Right ventricle myocardium inferior (tissue), 1 donor: ENCODE measurements at regions of chr5 and their contacts with region 1.

Region 1: GRCh38 chr5:89457411-89458331 is 574.7 kb upstream of the MEF2C start:
- DNase-seq: no peak
- ATAC-seq: peak; percentile 97

Region 2: DNA sequence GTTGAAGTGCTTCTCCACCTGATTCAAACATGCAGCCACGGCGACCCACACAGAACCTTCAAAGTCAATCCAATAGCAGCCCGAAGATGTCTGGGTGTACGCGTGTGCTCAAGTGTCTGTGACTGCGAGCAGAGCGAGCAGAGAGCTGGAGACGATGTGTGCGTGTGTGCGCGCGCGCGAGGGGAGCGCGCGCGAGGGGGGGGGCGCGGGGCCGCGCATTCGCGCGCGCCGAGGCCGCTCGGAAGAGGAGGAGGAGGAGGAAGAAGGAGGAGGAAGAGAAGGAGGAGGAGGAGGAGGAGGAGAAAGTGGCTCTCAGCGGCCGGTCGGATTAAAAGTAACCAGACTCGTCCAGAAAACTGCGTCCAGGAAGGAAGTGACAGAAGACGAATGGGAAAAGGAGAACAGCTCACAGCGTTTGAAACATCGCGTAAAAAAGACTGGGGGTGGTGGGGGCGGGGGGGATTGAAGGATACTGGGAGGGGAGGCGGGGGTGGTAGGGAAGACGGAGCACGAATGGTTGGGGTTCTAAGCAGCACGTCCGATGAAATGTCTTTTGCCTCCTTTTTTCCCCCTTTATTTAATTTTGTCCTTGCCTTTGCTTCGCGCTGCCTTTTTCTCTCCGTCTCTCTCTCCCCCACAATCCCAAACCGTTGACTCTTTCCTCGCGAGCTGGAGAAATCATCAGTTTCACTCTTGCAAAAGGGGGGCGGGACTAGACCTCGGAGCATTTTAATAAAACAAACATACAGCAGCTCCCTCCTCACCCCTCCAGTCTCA is 574.4 kb before region 1 on chr5 and contains the start of gene MEF2C:
- intact Hi-C with region 1: loop called (anchors 5 kb)
- DNase-seq: peak; percentile 86
- ATAC-seq: peak; percentile 85
- total RNA-seq, gene MEF2C: 46.7 TPM

Region 3: DNA sequence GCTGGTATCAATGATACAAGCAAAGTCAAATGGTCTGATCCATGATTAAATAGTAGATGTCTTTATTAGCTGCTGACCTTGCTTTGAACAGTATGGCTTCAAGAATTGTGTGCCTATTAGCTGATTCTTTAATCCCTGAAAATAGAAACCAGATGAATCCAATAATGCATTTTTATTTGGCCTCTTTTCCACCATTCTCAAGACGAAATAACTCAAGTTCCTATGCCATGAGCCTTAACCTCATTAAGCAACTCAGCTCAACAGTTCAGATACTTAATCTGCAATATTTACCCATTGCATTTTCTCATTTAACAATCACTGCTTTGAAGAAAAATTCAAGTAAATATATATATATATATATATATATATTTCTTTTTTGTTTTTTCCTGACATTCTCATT is 13.9 kb after region 1 on chr5:
- intact Hi-C with region 1: no loop called
- DNase-seq: no peak
- ATAC-seq: no peak